Naive thymus-derived CD4-positive, alpha-beta T cell (primary cell): ENCODE measurements at regions of chr5 and their contacts with region 1.

Region 1: DNA sequence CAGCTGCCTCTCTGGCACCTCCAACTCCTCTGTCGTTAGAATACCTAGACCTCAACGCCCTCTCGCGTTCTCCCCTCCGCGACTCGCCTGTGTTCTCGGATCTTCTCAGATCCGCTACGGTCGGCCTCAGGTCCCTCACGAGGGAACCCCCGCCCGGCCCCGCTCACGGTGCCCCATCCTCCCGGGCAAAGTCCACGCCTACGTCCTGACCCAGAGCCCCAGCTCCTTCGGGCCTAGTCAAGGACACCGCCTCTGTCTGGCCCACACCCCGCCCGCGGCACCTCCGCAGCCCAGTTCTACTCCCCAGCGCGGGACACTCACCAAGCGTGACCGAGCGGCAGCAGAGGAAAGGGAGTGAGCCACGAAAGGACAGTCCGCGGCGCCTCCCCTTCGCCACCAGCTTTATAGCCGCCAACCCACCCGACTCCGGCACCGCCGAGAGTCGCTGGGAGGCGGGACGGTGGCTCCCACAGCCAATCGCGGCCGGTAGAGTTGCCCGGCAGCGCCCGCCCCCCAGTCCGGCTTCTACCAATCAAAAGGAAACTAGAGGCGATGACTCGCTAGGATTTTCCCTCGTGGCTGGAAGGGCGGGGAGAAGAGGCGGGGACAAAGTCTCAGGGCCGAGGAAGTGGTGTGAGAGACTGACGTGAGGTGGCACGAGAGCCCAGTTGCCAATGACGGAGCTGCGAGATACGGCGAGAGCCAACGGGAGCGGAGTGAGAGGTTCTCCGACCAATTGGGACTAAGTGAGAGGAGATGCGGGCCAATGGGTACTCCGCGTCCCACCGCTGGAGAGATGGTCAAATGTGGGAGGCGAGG is at the start of gene HMGCS1:
- DNase-seq: peak; percentile 94 to 99 (median 99)
- ATAC-seq: peak; percentile 93
- H3K4me3 ChIP-seq: peak within 1 kb of the TSS; percentile 89
- H3K4me3 Mint-ChIP-seq: peak within 1 kb of the TSS; percentile 82 to 99 (median 94)
- H3K27ac ChIP-seq: peak within 1 kb of the TSS; percentile 95
- H3K27ac Mint-ChIP-seq: peak within 1 kb of the TSS; percentile 81 to 98 (median 94)
- H3K4me1 ChIP-seq: peaks cover 9 to 12% of the 10 kb centered on the region in 2 donors
- H3K4me1 Mint-ChIP-seq: peaks cover 19 to 63% (median 39%) of the 10 kb centered on the region in 7 donors
- H3K27me3 ChIP-seq: no peaks in the 10 kb centered on the region
- H3K27me3 Mint-ChIP-seq: peaks cover 0 to 2% (median 0%) of the 10 kb centered on the region in 5 donors
- total RNA-seq, gene HMGCS1: 32.2 to 77.5 (median 48.2) TPM

Region 2: GRCh38 chr5:41903892-41904799 is 1409.1 kb before region 1 on chr5 and contains the start of gene RIMOC1:
- CTCF ChIA-PET with region 1: no interaction called
- POLR2A ChIA-PET with region 1: interaction called, 4 read pairs
- intact Hi-C with region 1: loop called (anchors 1 to 10 kb)
- DNase-seq: peak; percentile 94 to 98 (median 97)
- ATAC-seq: peak; percentile 94
- H3K4me3 ChIP-seq: peak within 1 kb of the TSS; percentile 90
- H3K4me3 Mint-ChIP-seq: peak within 1 kb of the TSS; percentile 84 to 99 (median 98)
- H3K27ac ChIP-seq: peak within 1 kb of the TSS; percentile 85
- H3K27ac Mint-ChIP-seq: peak within 1 kb of the TSS; percentile 97 to 100 (median 99)
- H3K4me1 ChIP-seq: peaks cover 16 to 18% of the 10 kb centered on the region in 2 donors
- H3K4me1 Mint-ChIP-seq: peaks cover 21 to 54% (median 46%) of the 10 kb centered on the region in 7 donors
- H3K27me3 ChIP-seq: no peaks in the 10 kb centered on the region
- H3K27me3 Mint-ChIP-seq: peaks cover 0 to 11% (median 0%) of the 10 kb centered on the region in 5 donors
- total RNA-seq, gene RIMOC1: 13.8 to 40.6 (median 27.5) TPM

Region 3: DNA sequence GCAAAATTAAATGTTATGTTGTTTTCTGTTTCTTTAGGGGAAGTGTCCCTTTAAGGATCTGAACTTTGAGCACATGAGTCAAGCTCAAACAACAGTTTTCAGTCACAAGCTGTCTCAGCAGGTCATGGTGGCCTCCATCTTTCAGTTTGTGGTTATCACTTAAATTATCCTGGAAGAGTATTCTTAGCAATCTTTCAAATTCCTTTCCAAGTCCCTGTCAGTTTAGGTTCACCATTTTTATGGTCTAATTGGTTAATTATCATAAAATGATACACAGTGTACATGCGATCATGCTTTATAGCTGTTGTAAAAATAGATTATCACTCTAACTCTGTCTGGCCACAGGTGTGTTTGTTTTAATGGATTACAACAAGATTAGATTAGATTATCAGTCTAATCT is 458.4 kb before region 1 on chr5:
- CTCF ChIA-PET with region 1: no interaction called
- POLR2A ChIA-PET with region 1: no interaction called
- intact Hi-C with region 1: no loop called
- DNase-seq: no peak
- ATAC-seq: no peak
- H3K4me3 ChIP-seq: no peak overlapping the region
- H3K4me3 Mint-ChIP-seq: no peak overlapping the region
- H3K27ac ChIP-seq: no peak overlapping the region
- H3K27ac Mint-ChIP-seq: no peak overlapping the region
- H3K4me1 ChIP-seq: no peaks in the 10 kb centered on the region
- H3K4me1 Mint-ChIP-seq: no peaks in the 10 kb centered on the region
- H3K27me3 ChIP-seq: no peaks in the 10 kb centered on the region
- H3K27me3 Mint-ChIP-seq: peaks cover under 1 to 12% (median 5%) of the 10 kb centered on the region in 5 donors

Region 4: DNA sequence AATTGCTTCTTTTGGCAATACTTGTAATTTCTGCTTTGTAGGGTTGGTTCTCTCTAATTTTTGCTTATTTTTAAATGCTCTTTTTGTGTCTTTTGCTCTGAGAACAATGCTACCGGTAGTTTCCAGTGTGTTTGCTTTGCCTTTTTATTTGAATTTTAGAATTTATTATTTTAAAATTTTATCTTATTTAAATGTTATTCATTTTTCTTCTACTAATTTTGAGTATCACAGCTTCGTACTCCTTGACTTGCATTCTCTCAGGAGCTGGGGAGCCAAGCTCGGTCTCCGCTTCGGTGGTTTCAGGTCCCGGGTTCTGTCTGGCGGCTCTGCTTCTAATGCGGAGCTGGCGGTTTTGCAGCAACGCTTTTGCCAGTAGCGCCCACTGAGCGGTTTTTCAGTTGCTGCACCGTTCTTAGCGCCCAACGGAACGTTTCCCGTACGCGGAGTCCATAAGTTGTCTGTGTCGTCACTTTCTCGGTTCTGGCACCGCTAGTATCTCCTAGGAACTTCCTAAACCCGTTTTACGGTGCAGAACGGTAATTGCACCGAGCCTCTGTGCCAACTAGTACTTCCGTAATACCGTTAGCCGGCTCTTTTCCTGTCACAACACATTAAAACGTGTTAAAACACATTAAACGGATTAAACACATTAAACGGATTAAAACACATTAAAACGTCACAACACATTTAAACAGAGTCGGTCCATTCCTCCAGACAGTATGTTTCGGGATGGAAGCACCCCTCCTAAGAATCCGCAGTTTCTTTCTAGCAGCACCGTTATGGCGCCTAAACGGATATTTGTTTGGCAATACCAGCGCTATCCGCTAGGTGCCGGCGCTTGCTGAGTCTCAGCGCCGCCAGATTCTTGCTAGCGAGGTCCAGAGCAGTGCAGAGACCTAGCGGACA is 318.7 kb before region 1 on chr5:
- CTCF ChIA-PET with region 1: no interaction called
- POLR2A ChIA-PET with region 1: interaction called, 24 read pairs
- intact Hi-C with region 1: loop called (anchors 1 to 2 kb)
- DNase-seq: peak; percentile 73 to 89 (median 85)
- ATAC-seq: peak; percentile 73
- H3K4me3 ChIP-seq: peak overlapping the region; percentile 84
- H3K4me3 Mint-ChIP-seq: peak overlapping the region; percentile 84 to 100 (median 98)
- H3K27ac ChIP-seq: peak overlapping the region; percentile 89
- H3K27ac Mint-ChIP-seq: peak overlapping the region; percentile 97 to 100 (median 100)
- H3K4me1 ChIP-seq: peaks cover 18 to 21% of the 10 kb centered on the region in 2 donors
- H3K4me1 Mint-ChIP-seq: peaks cover 16 to 49% (median 29%) of the 10 kb centered on the region in 7 donors
- H3K27me3 ChIP-seq: no peaks in the 10 kb centered on the region
- H3K27me3 Mint-ChIP-seq: peaks cover 0 to under 1% (median 0%) of the 10 kb centered on the region in 5 donors

Region 5: GRCh38 chr5:43066799-43067741 is 246.2 kb before region 1 on chr5:
- CTCF ChIA-PET with region 1: no interaction called
- POLR2A ChIA-PET with region 1: interaction called, 29 read pairs
- intact Hi-C with region 1: loop called (anchors 1 kb)
- DNase-seq: peak; percentile 80 to 96 (median 89)
- ATAC-seq: peak; percentile 69
- H3K4me3 ChIP-seq: peak overlapping the region; percentile 82
- H3K4me3 Mint-ChIP-seq: peak overlapping the region; percentile 93 to 100 (median 98)
- H3K27ac ChIP-seq: peak overlapping the region; percentile 90
- H3K27ac Mint-ChIP-seq: peak overlapping the region; percentile 99 to 100 (median 99)
- H3K4me1 ChIP-seq: peaks cover 25 to 33% of the 10 kb centered on the region in 2 donors
- H3K4me1 Mint-ChIP-seq: peaks cover 26 to 67% (median 44%) of the 10 kb centered on the region in 7 donors
- H3K27me3 ChIP-seq: no peaks in the 10 kb centered on the region
- H3K27me3 Mint-ChIP-seq: no peaks in the 10 kb centered on the region

Region 6: GRCh38 chr5:43281840-43282658 is 31.2 kb before region 1 on chr5:
- CTCF ChIA-PET with region 1: no interaction called
- POLR2A ChIA-PET with region 1: no interaction called
- intact Hi-C with region 1: no loop called
- DNase-seq: no peak
- ATAC-seq: no peak
- H3K4me3 ChIP-seq: no peak overlapping the region
- H3K4me3 Mint-ChIP-seq: no peak overlapping the region
- H3K27ac ChIP-seq: no peak overlapping the region
- H3K27ac Mint-ChIP-seq: no peak overlapping the region
- H3K4me1 ChIP-seq: no peaks in the 10 kb centered on the region
- H3K4me1 Mint-ChIP-seq: peaks cover 0 to 2% (median 0%) of the 10 kb centered on the region in 7 donors
- H3K27me3 ChIP-seq: no peaks in the 10 kb centered on the region
- H3K27me3 Mint-ChIP-seq: peaks cover 0 to 6% (median 0%) of the 10 kb centered on the region in 5 donors

Region 7: GRCh38 chr5:43348207-43348606 is 35.0 kb after region 1 on chr5:
- CTCF ChIA-PET with region 1: no interaction called
- POLR2A ChIA-PET with region 1: no interaction called
- intact Hi-C with region 1: no loop called
- DNase-seq: no peak
- ATAC-seq: no peak
- H3K4me3 ChIP-seq: no peak overlapping the region
- H3K4me3 Mint-ChIP-seq: no peak overlapping the region
- H3K27ac ChIP-seq: no peak overlapping the region
- H3K27ac Mint-ChIP-seq: no peak overlapping the region
- H3K4me1 ChIP-seq: no peaks in the 10 kb centered on the region
- H3K4me1 Mint-ChIP-seq: no peaks in the 10 kb centered on the region
- H3K27me3 ChIP-seq: no peaks in the 10 kb centered on the region
- H3K27me3 Mint-ChIP-seq: peaks cover 5 to 15% (median 7%) of the 10 kb centered on the region in 5 donors

Region 8: GRCh38 chr5:43389679-43390329 is 76.6 kb after region 1 on chr5:
- CTCF ChIA-PET with region 1: interaction called, 3 read pairs
- POLR2A ChIA-PET with region 1: no interaction called
- intact Hi-C with region 1: loop called (anchors 2 kb)
- DNase-seq: peak in 8 of 9 donors; percentile 28 to 60 (median 50)
- ATAC-seq: peak; percentile 92
- H3K4me3 ChIP-seq: no peak overlapping the region
- H3K4me3 Mint-ChIP-seq: no peak overlapping the region
- H3K27ac ChIP-seq: no peak overlapping the region
- H3K27ac Mint-ChIP-seq: peak overlapping the region in 2 of 9 donors; percentile 62 to 67
- H3K4me1 ChIP-seq: peaks cover 0 to 7% of the 10 kb centered on the region in 2 donors
- H3K4me1 Mint-ChIP-seq: peaks cover 4 to 48% (median 34%) of the 10 kb centered on the region in 7 donors
- H3K27me3 ChIP-seq: no peaks in the 10 kb centered on the region
- H3K27me3 Mint-ChIP-seq: no peaks in the 10 kb centered on the region

Region 9: GRCh38 chr5:43602461-43603343 is 289.5 kb after region 1 on chr5 and contains the start of gene NNT:
- CTCF ChIA-PET with region 1: no interaction called
- POLR2A ChIA-PET with region 1: no interaction called
- intact Hi-C with region 1: loop called (anchors 1 to 5 kb)
- DNase-seq: peak; percentile 71 to 85 (median 78)
- ATAC-seq: peak; percentile 85
- H3K4me3 ChIP-seq: peak within 1 kb of the TSS; percentile 78
- H3K4me3 Mint-ChIP-seq: peak within 1 kb of the TSS; percentile 90 to 99 (median 94)
- H3K27ac ChIP-seq: peak within 1 kb of the TSS; percentile 87
- H3K27ac Mint-ChIP-seq: peak within 1 kb of the TSS; percentile 86 to 98 (median 93)
- H3K4me1 ChIP-seq: peaks cover 6 to 14% of the 10 kb centered on the region in 2 donors
- H3K4me1 Mint-ChIP-seq: peaks cover 26 to 72% (median 60%) of the 10 kb centered on the region in 7 donors
- H3K27me3 ChIP-seq: no peaks in the 10 kb centered on the region
- H3K27me3 Mint-ChIP-seq: no peaks in the 10 kb centered on the region
- total RNA-seq, gene NNT: 42.5 to 73.5 (median 60.7) TPM